Activated T-helper 2 cell treated with anti-CD3 and anti-CD28 coated beads, Interferon-gamma antibody, Interleukin-2, Interleukin-4, amounts not matched to agents 10 μg/mL and 5 μg/mL and 100 μg/mL, durations not matched to agents 14 hours and 24 hours and 36 hours (primary cell): ENCODE measurements at regions of chr9 and their contacts with region 1.

Region 1: GRCh38 chr9:131656356-131657036 is 83.4 kb downstream of the RAPGEF1 start:
- DNase-seq: peak; percentile 55
- H3K4me3 Mint-ChIP-seq: peak overlapping the region; percentile 28
- H3K27ac Mint-ChIP-seq: peak overlapping the region; percentile 89
- H3K4me1 Mint-ChIP-seq: peaks cover 61% of the 10 kb centered on the region
- H3K27me3 Mint-ChIP-seq: no peaks in the 10 kb centered on the region

Region 2: GRCh38 chr9:131645078-131645776 is 11.3 kb before region 1 on chr9:
- intact Hi-C with region 1: loop called (anchors 2 kb)
- DNase-seq: no peak
- H3K4me3 Mint-ChIP-seq: no peak overlapping the region
- H3K27ac Mint-ChIP-seq: peak overlapping the region; percentile 86
- H3K4me1 Mint-ChIP-seq: peaks cover 52% of the 10 kb centered on the region
- H3K27me3 Mint-ChIP-seq: no peaks in the 10 kb centered on the region